ENCODE measurements at regions of chr5 and their contacts with region 1.

Region 1: GRCh38 chr5:56155992-56156584 is 77.0 kb downstream of the ANKRD55 start:
- DNase-seq: peak in 2 of 14 experiments; percentile 59 to 65
- ATAC-seq: no peak
- H3K4me3 ChIP-seq: no peak overlapping the region
- H3K4me3 Mint-ChIP-seq: peak overlapping the region; percentile 78
- H3K27ac ChIP-seq: peak overlapping the region; percentile 65 to 71
- H3K27ac Mint-ChIP-seq: peak overlapping the region; percentile 100
- H3K4me1 ChIP-seq: peaks cover 71% of the 10 kb centered on the region
- H3K4me1 Mint-ChIP-seq: peaks cover 86% of the 10 kb centered on the region
- H3K27me3 ChIP-seq: no peaks in the 10 kb centered on the region
- H3K27me3 Mint-ChIP-seq: no peaks in the 10 kb centered on the region
- CTCF ChIP-seq: no peak

Region 2: DNA sequence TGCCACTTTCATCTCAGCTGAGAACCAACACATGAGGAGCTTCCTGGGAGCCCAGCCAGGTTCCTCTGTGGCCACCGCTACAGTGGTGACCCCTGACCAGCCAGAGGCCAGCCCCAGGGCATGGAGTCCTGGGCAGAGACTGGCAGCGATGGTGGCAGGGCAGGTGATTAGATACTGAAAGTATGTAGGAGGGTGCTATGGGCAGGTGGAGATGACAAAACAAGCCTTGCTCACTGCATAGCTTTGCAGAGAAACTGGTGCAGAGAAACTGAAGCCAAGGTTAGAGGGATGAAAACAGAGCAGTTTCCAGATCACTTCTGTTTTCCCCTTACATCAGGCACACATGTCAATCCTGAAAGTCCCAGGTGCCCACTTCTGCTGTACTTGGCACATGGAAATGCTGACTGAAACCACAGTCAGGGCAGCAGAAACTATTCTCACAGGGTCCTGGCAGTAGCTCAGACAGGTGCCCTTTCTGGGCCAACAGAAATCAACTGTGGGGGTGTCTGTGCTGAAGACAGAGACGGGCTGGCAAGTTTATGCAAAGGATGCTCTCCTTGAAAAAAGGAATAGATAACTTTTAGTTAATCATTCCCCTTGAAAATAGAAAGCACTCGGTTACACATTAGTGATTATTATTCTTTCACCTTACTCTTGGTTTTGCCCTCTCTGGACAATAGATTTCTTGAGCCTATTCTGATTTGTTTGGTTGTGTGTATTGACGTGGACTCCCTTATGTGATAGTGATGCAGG is 13.3 kb before region 1 on chr5:
- CTCF ChIA-PET with region 1: interaction called, 3 read pairs
- POLR2A ChIA-PET with region 1: interaction called, 7 read pairs
- intact Hi-C with region 1: loop called in 1 of 2 experiments (anchors 2 kb)
- DNase-seq: peak in 1 of 14 experiments; percentile 38
- ATAC-seq: peak; percentile 61
- H3K4me3 ChIP-seq: peak overlapping the region; percentile 15
- H3K4me3 Mint-ChIP-seq: peak overlapping the region; percentile 62
- H3K27ac ChIP-seq: peak overlapping the region; percentile 26 to 54
- H3K27ac Mint-ChIP-seq: peak overlapping the region; percentile 82
- H3K4me1 ChIP-seq: peaks cover 40% of the 10 kb centered on the region
- H3K4me1 Mint-ChIP-seq: peaks cover 83% of the 10 kb centered on the region
- H3K27me3 ChIP-seq: no peaks in the 10 kb centered on the region
- H3K27me3 Mint-ChIP-seq: no peaks in the 10 kb centered on the region
- CTCF ChIP-seq: no peak

Region 3: GRCh38 chr5:56190497-56190896 is 34.4 kb after region 1 on chr5:
- CTCF ChIA-PET with region 1: interaction called, 3 read pairs
- POLR2A ChIA-PET with region 1: interaction called, 3 read pairs
- intact Hi-C with region 1: loop called in 1 of 2 experiments (anchors 5 kb)
- DNase-seq: peak in 13 of 14 experiments; percentile 11 to 77 (median 48)
- ATAC-seq: peak; percentile 71
- H3K4me3 ChIP-seq: no peak overlapping the region
- H3K4me3 Mint-ChIP-seq: no peak overlapping the region
- H3K27ac ChIP-seq: no peak overlapping the region
- H3K27ac Mint-ChIP-seq: peak overlapping the region; percentile 52
- H3K4me1 ChIP-seq: peaks cover 4% of the 10 kb centered on the region
- H3K4me1 Mint-ChIP-seq: peaks cover 35% of the 10 kb centered on the region
- H3K27me3 ChIP-seq: no peaks in the 10 kb centered on the region
- H3K27me3 Mint-ChIP-seq: no peaks in the 10 kb centered on the region
- CTCF ChIP-seq: no peak